ENCODE measurements at regions of chr18 and their contacts with region 1.

Region 1: DNA sequence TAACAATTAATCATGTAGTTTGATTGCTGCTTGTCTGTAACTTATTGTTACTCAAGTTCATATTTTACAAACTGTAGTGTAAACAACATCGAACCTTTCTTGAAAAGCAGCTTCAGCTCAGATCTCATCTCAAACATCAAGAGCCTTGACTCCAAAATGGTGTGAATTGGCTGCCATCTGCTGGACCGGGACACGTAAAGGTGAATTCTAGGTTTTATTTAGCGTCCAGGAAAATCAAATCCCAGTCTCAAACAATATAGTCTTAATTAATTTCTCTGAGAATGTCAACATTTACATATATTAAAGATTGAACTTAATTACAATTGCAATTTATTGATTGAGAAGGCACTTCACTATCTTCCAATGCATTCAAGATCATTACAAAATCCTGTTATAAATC is 453.0 kb downstream of the GALR1 start:
- DNase-seq: peak; percentile 44
- H3K4me3 Mint-ChIP-seq: no peak overlapping the region
- H3K27ac Mint-ChIP-seq: no peak overlapping the region
- H3K4me1 Mint-ChIP-seq: no peaks in the 10 kb centered on the region
- H3K27me3 Mint-ChIP-seq: peaks cover 43% of the 10 kb centered on the region
- CTCF ChIP-seq: peak; percentile 57

Region 2: DNA sequence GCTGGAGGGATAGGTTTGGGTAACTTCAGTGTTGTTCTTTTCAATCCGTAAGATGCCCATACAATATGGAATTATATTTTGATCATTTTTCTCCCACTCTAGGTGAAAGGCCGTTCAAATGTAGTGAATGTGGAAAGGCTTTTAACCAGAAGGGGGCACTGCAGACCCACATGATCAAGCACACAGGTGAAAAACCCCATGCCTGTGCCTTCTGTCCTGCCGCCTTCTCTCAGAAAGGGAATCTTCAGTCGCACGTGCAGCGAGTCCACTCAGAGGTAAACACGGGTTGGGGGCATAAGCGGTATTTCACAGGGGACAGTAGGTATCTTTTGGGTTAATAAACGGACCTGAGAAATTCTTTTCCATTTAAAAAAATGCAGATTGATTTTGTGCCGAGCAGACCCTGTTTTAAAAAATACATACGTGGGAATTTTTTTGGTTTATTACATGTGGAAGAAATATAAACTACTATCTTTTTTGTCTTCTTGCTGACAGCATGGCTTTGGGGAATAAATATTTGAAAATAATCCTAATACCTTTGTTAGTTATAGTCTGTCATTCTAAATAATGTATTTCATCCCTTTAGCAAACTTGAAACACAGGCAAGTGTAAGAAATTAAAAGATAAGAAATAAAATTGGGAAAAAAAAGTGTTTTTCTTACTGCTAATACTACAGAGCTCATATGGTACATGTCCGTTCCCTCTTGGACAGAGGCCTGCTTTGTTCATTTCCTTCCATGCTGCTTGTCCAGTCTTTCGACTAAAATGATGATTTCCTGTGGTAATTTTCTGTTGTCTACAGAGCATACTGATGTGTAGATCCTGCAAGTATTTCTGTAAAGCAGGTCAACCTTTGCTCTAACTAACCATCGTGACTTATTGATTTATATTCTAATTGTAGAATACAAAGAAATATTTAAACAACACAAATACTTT is 827.0 kb before region 1 on chr18:
- CTCF ChIA-PET with region 1: interaction called, 4 read pairs
- POLR2A ChIA-PET with region 1: no interaction called
- intact Hi-C with region 1: loop called (anchors 2 kb)
- DNase-seq: peak; percentile 60
- H3K4me3 Mint-ChIP-seq: no peak overlapping the region
- H3K27ac Mint-ChIP-seq: peak overlapping the region; percentile 60
- H3K4me1 Mint-ChIP-seq: no peaks in the 10 kb centered on the region
- H3K27me3 Mint-ChIP-seq: no peaks in the 10 kb centered on the region
- CTCF ChIP-seq: peak; percentile 59

Region 3: DNA sequence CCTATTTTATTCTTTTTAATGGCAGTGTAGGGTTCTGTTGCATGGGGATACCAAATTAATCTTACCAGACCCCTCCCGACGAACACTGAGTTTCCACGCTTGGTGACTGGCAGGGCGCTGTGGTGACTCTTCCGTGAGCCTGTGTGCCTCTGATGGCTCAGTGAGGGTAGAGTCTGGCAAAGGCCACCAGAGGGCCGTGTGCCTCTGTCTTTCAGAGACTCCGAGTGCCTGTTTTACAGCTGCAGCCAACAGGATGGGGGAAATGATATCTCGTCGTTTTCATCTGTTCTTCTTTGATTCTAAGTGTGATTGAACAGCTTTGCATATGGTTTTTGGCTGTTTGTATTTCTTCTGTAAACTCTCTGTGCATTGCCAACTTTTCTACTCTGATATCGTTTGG is 780.6 kb before region 1 on chr18:
- CTCF ChIA-PET with region 1: no interaction called
- POLR2A ChIA-PET with region 1: no interaction called
- intact Hi-C with region 1: loop called (anchors 5 kb)
- DNase-seq: peak; percentile 5
- H3K4me3 Mint-ChIP-seq: no peak overlapping the region
- H3K27ac Mint-ChIP-seq: no peak overlapping the region
- H3K4me1 Mint-ChIP-seq: peaks cover 5% of the 10 kb centered on the region
- H3K27me3 Mint-ChIP-seq: no peaks in the 10 kb centered on the region
- CTCF ChIP-seq: peak; percentile 10

Region 4: DNA sequence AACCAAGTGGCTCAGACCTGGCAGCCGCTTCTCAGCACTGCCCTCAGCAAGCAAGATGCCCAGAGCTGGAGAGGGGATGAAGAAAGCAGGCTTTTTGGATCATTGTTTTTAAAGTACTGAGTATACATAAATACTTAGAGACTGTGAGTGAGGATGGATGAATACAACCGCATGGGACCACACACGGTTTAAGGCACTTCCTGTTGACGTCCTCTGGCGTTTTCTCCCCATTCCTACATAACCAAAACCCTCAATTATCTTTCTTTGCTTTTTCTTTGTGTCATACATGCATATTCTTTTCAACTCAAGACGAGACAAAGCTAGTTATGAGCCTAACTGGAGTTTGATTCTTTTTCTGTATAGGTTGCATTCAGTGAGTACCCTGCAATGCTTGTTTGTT is 254.6 kb before region 1 on chr18:
- CTCF ChIA-PET with region 1: no interaction called
- POLR2A ChIA-PET with region 1: no interaction called
- intact Hi-C with region 1: loop called (anchors 10 kb)
- DNase-seq: no peak
- H3K4me3 Mint-ChIP-seq: no peak overlapping the region
- H3K27ac Mint-ChIP-seq: no peak overlapping the region
- H3K4me1 Mint-ChIP-seq: peaks cover 31% of the 10 kb centered on the region
- H3K27me3 Mint-ChIP-seq: peaks cover 5% of the 10 kb centered on the region
- CTCF ChIP-seq: no peak

Measured in MCF 10A (cell line).